HepG2 (cell line): ENCODE measurements at regions of chr15 and their contacts with region 1.

Region 1: DNA sequence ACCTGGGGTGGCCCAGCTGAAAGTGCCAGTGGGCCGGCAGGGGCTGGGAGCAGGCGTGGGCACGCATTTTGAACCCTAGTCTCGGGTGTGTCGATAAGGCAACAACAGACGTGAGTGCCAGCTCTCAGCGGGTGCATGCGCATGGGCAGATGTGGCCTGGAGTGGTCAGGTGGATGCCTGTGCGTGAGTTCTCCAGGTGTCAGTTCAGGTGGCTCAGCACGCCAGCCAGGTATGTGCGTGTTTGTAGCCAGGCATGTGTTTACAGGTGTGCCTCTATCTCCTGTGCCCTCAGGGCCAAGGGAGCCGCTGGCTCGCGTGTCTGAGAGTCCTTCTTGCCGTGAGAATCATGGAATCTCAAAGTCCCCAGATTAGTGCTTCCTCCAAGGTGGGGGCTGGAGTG is 14.8 kb downstream of the CYP1A2 start:
- DNase-seq: no peak
- ATAC-seq: no peak
- H3K4me3 ChIP-seq: no peak overlapping the region
- H3K27ac ChIP-seq: no peak overlapping the region
- H3K4me1 ChIP-seq: peaks cover 24% of the 10 kb centered on the region
- H3K27me3 ChIP-seq: no peaks in the 10 kb centered on the region
- CTCF ChIP-seq: no peak
- EP300 ChIP-seq: no peak
- POLR2A ChIP-seq: no peak
- RAD21 ChIP-seq: no peak

Region 2: GRCh38 chr15:74589826-74590225 is 173.6 kb before region 1 on chr15:
- CTCF ChIA-PET with region 1: no interaction called
- POLR2A ChIA-PET with region 1: no interaction called
- in situ Hi-C with region 1: no loop called
- intact Hi-C with region 1: no loop called
- DNase-seq: no peak
- ATAC-seq: no peak
- H3K4me3 ChIP-seq: no peak overlapping the region
- H3K27ac ChIP-seq: no peak overlapping the region
- H3K4me1 ChIP-seq: peaks cover 16% of the 10 kb centered on the region
- H3K27me3 ChIP-seq: no peaks in the 10 kb centered on the region; a peak in 1 of 5 replicates
- CTCF ChIP-seq: no peak
- EP300 ChIP-seq: no peak
- POLR2A ChIP-seq: no peak
- RAD21 ChIP-seq: no peak

Region 3: DNA sequence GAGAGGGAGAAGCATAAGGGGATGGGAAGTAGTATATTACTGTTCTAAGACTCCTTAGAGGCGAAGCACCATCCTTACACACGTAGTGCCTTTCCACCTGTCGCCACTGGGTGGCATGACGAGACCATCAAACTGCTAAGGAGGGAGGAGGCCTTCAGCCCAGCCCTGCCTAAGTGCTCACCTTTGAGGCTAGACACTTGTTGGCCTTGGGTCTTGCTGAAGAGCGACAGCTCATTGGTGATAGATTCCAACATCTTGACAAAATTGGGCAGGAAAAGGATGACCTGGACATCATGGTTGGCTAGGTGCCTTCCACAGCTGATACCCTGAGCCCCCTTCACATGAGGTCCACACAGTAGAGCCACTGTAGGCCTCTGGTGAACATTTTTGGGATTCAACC is 128.2 kb before region 1 on chr15:
- CTCF ChIA-PET with region 1: interaction called, 59 read pairs
- POLR2A ChIA-PET with region 1: interaction called, 12 read pairs
- in situ Hi-C with region 1: loop called (anchors 5 kb)
- intact Hi-C with region 1: no loop called
- DNase-seq: peak; percentile 60
- ATAC-seq: peak; percentile 48
- H3K4me3 ChIP-seq: no peak overlapping the region
- H3K27ac ChIP-seq: no peak overlapping the region
- H3K4me1 ChIP-seq: peaks cover 20% of the 10 kb centered on the region
- H3K27me3 ChIP-seq: no peaks in the 10 kb centered on the region
- CTCF ChIP-seq: peak; percentile 95
- EP300 ChIP-seq: no peak
- POLR2A ChIP-seq: no peak
- RAD21 ChIP-seq: peak; percentile 88

Region 4: GRCh38 chr15:74723754-74724334 is 39.6 kb before region 1 on chr15:
- CTCF ChIA-PET with region 1: no interaction called
- POLR2A ChIA-PET with region 1: interaction called, 53 read pairs
- in situ Hi-C with region 1: no loop called
- intact Hi-C with region 1: no loop called
- DNase-seq: peak; percentile 82
- ATAC-seq: peak; percentile 56
- H3K4me3 ChIP-seq: peak overlapping the region in 2 of 3 experiments; percentile 11 to 33; a peak in 2 of 6 replicates
- H3K27ac ChIP-seq: peak overlapping the region; percentile 82
- H3K4me1 ChIP-seq: peaks cover 52% of the 10 kb centered on the region
- H3K27me3 ChIP-seq: no peaks in the 10 kb centered on the region
- CTCF ChIP-seq: no peak
- EP300 ChIP-seq: peak in 1 of 2 experiments; percentile 35; a peak in 1 of 4 replicates
- POLR2A ChIP-seq: 0 out of 4 replicates have a peak, but pooled peaks of 1 of the 2 experiments have one; percentile 36
- RAD21 ChIP-seq: no peak

Region 5: DNA sequence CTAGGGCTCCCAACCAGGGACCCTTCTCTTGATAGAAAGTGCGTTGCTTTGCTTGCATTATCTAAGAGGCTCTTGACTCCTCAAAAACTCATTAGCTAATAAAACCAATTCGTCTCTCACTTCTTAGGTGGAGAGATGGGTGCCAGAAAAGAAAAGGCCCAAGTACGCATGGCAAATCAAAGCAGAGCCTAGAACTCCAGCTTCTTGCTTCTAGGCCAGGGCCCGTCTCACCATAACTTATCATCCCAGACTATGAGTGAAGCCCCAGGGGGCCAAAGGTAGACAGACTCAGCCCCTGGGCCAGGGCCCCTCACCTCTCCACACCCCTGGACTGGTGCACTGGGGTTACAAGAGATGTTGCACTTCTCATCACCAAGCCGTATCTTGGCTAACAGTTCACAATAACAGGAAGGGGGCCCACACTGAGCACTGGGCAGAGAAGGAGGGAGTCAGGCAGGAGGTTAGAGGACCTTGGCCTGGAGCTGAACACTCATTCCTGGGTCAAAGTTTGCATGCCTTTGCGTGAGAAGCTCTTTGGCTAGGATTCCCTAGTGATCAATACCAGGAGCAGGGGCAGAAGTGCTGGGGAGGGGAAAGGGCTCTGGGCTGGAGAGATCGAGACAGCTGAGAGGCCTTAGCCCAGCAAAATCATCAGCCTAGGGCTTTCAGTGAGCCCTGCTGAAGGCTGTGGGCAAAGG is 32.6 kb before region 1 on chr15:
- CTCF ChIA-PET with region 1: no interaction called
- POLR2A ChIA-PET with region 1: interaction called, 53 read pairs
- in situ Hi-C with region 1: no loop called
- intact Hi-C with region 1: no loop called
- DNase-seq: peak; percentile 84
- ATAC-seq: peak; percentile 87
- H3K4me3 ChIP-seq: peak overlapping the region in 1 of 3 experiments; percentile 61; a peak in 2 of 6 replicates
- H3K27ac ChIP-seq: peak overlapping the region; percentile 84
- H3K4me1 ChIP-seq: peaks cover 68% of the 10 kb centered on the region
- H3K27me3 ChIP-seq: no peaks in the 10 kb centered on the region
- CTCF ChIP-seq: peak; percentile 28; the same call in 1 of the 2 replicates
- EP300 ChIP-seq: peak; percentile 75 to 90
- POLR2A ChIP-seq: peak in 1 of 2 experiments; percentile 26; a peak in 3 of 4 replicates
- RAD21 ChIP-seq: peak; percentile 22; the same call in 1 of the 2 replicates